Motor neuron (in vitro differentiated cells): ENCODE measurements at regions of chr20 and their contacts with region 1.

Region 1: DNA sequence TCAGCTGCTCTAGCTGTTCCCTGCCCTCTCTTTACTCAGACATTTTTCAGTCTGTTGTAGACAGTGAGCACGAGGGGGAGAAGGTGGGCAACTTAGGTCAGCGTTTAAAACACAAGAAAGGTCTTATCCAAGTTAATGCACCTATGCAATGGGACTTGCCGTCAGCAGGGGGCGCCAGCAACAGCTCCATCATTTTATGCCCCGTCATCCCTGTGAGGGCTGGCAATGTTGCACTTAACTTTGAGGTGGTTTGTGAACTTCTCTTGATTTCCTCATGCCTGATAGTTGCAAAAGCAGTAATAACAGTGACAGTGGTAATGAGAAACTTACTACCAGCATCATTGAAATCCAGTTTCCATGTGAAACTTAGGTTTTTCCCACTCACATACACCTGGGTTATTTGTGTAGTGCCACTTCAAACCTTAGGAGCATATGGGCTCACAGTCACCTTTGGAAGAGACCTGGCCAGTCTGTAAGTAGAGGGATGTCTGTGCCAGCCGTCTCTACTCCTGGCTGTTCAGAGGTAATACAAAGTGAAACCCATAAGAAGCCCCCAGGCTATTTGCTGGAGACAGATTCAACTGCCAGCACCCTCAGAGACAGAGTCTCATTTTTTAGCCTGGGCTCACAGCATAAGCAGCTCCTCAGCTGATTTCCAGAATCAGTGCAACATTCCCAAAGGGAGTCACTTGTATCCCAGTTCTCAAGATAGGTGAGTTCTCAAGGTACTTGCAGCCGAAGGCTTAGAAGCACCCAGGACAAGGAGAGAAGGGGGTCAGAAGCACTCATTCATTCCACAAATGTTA is 44.8 kb upstream of the ID1 start:
- ATAC-seq: peak in 5 of 8 experiments; percentile 19 to 49 (median 31)
- H3K4me3 ChIP-seq: no peak overlapping the region
- H3K27ac ChIP-seq: peak overlapping the region in 1 of 2 donors; percentile 6
- H3K4me1 ChIP-seq: peaks cover 0 to 4% of the 10 kb centered on the region in 2 donors

Region 2: DNA sequence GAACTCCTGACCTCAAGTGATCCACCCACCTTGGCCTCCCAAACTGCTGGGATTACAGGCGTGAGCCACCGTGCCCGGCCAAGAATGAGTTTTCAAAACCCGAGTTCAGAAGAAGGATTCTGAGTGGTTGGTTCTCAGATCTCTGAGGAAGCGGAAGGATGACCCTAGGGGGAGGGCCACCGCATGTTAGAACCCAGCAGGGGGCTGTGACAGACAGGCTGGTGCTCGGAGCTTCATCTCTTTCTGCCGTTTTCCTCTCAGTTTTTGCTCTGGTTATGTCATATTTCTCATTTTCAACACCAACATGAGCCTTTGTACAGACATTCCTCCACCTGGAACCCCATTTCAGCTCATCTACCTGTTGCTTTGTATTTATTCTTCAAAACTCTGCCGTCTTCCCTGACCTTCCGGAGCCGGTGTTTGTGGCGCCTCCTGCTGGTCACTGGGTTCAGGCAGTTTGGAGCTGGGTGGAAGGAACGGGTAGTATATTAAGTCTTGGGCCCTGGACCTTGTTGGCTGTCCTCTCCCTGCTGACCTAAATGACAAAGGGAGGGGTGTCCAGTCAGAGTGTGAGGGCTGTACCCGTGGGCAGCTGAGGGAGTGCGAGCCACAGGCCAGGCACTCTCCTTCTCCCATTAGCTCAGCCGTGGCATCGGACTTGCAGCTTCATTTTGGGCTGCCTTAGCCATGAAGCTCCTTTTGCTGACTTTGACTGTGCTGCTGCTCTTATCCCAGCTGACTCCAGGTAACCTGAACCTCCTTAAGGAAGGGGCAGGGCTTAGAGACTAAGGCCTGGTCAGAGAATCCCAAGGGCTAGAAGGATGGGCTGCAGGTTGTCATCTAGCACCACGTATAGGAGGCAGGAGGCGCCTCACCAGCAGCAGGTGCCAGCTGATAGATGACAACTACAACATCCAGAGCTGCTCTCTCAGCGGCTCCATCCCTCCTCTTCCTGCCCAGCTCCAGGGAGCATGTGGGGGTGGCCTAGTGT is 120.0 kb before region 1 on chr20 and contains the start of gene DEFB123:
- in situ Hi-C with region 1: no loop called
- ATAC-seq: no peak
- H3K4me3 ChIP-seq: no peak within 1 kb of the TSS
- H3K27ac ChIP-seq: no peak within 1 kb of the TSS
- H3K4me1 ChIP-seq: no peaks in the 10 kb centered on the region
- total RNA-seq, gene DEFB123: not detected

Region 3: GRCh38 chr20:31617432-31618104 is 57.3 kb after region 1 on chr20:
- in situ Hi-C with region 1: loop called in 4 of 9 experiments (anchors 5 to 10 kb)
- ATAC-seq: no peak
- H3K4me3 ChIP-seq: no peak overlapping the region
- H3K27ac ChIP-seq: no peak overlapping the region
- H3K4me1 ChIP-seq: no peaks in the 10 kb centered on the region

Region 4: DNA sequence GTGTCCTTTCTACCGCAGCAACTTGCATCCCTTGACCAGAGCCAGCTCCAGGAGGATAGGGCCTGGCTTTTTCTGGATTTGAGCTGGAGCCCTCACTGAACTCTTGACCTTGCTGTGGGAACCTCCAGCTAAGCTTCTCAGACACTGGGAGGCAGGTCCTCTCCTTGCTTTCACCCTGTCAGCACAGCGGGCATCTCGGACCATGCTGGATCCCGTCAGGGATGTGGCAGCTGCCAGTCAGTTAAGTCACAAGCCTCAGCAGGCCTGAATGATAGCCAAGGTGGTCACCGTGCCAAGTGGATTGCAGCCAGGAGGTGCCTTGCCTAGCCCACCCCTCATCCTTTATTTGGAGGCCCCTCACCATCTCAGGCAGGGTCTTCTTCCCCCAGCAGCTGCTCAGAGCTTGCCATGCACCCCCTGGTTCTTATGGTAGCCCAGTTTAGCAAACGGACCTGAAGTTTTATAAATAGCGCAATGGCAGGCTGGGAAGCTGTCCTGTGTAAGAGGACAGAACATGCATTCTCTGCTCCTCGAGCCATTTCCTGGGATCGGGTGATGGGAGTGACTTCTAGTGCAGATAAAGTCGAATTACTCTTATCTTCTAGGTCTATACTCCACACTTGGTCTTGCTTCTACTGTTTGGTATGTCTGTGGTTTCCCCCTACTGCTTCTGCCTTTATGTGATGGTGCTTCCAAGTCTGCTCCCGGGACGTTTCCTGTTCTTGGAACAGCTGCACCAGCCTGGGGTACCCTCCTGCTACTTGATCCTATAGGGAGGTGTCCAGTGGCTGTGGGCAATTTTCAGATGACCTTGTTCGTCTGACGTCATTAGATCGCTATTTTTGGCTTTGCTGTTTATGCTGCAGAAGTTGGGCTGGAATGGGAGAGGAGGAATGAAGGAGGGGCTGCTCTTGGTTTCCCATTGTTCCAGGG is 251.8 kb after region 1 on chr20:
- in situ Hi-C with region 1: no loop called
- ATAC-seq: peak in 2 of 8 experiments; percentile 11 to 26
- H3K4me3 ChIP-seq: no peak overlapping the region
- H3K27ac ChIP-seq: no peak overlapping the region
- H3K4me1 ChIP-seq: peaks cover 0 to 9% of the 10 kb centered on the region in 2 donors

Region 5: DNA sequence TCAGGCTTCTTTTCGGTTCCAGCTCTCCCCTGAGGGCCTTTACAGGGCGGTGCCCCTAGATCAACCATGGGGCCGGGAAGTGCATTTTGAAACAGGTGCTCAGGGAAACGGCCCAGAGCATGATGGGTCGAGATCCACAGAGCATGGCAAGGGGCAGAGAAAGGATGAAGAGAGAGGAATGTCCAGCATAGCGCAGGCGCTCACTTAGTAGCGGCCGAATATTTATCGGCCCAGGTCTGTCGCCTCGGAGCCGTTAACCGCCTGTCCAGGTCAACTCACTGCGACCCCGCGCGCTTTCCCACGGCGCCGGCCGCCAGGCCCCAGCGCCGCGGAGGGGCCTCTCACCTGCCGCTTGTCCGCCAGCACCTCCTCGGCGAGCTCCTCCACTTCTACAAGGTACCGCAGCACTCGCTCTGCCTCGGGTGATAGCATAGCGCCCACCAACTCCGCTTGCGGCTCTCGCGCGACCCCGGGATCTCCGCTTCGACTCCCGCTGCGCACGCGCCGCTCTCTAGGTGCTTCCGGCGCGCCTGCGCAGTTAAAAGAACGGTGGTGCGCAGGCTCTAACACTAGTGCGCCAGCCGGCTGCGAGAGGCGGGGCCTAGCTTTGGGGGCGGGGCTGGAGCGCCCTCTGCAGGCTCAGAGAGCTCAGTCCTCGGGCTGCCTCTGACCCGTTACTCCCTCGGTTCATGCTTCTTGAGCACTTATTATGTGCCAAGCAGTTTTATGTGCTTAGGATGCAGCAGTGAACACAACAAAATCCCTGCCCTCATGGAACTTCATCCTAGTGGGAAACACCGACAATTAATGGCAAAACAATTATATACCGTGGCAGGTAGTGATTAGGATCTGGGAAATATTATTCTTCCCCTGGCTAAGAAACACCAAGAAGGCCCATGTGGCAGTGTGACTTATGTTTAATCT is 391.5 kb after region 1 on chr20 and contains the start of gene PDRG1:
- in situ Hi-C with region 1: no loop called
- ATAC-seq: peak; percentile 83 to 98 (median 96)
- H3K4me3 ChIP-seq: peak within 1 kb of the TSS; percentile 60 to 95 (median 88)
- H3K27ac ChIP-seq: peak within 1 kb of the TSS; percentile 75 to 77
- H3K4me1 ChIP-seq: peaks cover 7 to 8% of the 10 kb centered on the region in 2 donors
- total RNA-seq, gene PDRG1: 16.4 to 46.5 (median 22.2) TPM